Esophagus muscularis mucosa (tissue), 4 donors: ENCODE measurements at regions of chr1 and their contacts with region 1.

Region 1: DNA sequence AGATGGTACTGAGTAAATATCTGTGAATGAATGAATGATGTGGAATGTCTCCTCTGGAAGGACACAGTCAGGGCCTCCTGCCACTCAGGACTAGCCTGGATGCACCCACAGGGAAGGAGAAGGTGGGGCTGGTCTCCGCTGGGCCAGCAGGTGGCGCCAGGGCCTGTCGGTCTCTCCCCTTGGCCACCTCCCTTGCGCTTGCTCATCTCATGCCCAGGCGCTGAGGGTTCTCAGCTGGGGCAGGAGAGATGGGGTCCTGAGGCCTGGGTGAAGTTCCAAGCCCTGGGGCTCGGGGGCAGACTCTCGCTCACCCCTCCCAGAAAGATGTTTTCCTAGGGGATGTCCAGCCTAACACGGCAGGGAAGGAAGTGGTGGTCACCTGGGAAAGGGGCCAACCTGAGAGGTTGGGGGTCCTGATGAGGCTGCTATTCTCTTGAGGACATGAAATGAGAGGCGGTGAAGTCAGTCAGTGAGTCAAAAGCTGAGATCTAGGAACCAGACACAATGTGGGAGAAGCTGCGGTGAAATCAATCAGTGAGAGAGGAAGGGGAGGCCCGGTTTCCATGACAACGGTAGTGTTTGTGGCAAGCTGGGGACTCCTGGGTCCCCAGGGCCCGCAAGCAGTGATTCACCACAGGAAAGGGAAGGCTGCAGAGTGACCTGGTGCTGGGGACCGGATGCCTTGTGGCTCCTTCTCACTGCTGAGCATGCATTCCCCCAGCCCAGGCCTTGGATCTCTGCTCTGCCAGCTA is 14.6 kb upstream of the MEX3A start:
- DNase-seq: peak; percentile 97
- H3K4me3 ChIP-seq: peak overlapping the region in 2 of 4 donors; percentile 3 to 32
- H3K27ac ChIP-seq: peak overlapping the region; percentile 78 to 86 (median 84)
- H3K4me1 ChIP-seq: peaks cover 35 to 44% (median 42%) of the 10 kb centered on the region in 4 donors
- H3K27me3 ChIP-seq: no peaks in the 10 kb centered on the region
- CTCF ChIP-seq: peak in 2 of 3 experiments; percentile 97 to 99
- EP300 ChIP-seq: no peak
- POLR2A ChIP-seq: no peak

Region 2: GRCh38 chr1:156025877-156026276 is 70.9 kb before region 1 on chr1:
- intact Hi-C with region 1: no loop called
- DNase-seq: no peak
- H3K4me3 ChIP-seq: no peak overlapping the region
- H3K27ac ChIP-seq: no peak overlapping the region
- H3K4me1 ChIP-seq: peaks cover 0 to 5% (median 4%) of the 10 kb centered on the region in 4 donors
- H3K27me3 ChIP-seq: no peaks in the 10 kb centered on the region
- CTCF ChIP-seq: peak in 1 of 3 experiments; percentile 23
- EP300 ChIP-seq: no peak
- POLR2A ChIP-seq: no peak

Region 3: DNA sequence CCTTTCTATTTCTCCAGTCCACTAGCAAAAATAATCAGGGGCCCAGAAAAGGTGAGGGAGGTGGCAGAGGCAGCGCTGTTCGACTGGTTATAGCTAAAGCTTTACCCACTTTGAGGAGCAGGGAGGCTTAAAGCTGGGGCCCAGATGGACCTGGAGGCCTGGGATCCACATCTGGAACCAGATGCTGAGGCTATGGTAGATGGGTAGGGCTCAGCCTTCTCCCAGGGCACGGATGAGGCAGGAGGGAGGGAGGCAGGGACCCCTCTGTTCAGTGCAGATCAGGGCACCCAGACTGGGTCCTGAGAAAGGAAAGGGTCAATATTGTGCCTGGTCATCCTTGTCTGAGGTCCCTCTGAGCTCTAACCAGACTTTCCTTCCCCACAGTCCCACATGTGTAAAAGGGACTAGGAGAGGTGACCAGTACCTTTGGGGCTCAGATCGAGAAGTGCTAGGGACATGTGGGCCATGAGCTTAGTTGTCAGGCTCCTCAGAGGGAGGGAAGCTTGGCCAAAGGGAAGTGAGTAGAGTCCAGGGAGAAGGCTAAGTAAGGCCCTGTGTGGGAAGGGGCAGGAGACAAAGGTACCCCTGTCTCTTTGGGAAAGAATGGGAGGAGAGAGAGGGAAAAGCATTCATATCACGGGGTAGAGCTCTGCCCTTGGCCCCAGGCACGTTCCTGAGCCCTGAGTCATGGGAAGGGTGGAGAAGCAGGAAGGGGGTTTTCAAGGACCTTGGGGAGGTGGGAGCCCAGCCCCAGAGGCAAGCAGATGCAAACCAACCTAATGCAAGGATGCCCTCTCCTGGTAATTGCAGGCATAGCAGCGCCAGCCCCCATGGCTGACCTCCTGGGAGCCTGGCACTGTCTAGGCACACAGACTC is 33.1 kb after region 1 on chr1:
- intact Hi-C with region 1: loop called (anchors 1 kb)
- DNase-seq: no peak
- H3K4me3 ChIP-seq: peak overlapping the region; percentile 23 to 69 (median 32)
- H3K27ac ChIP-seq: peak overlapping the region; percentile 92 to 100 (median 96)
- H3K4me1 ChIP-seq: peaks cover 65 to 100% (median 70%) of the 10 kb centered on the region in 4 donors
- H3K27me3 ChIP-seq: no peaks in the 10 kb centered on the region
- CTCF ChIP-seq: peak; percentile 99
- EP300 ChIP-seq: no peak
- POLR2A ChIP-seq: no peak

Region 4: DNA sequence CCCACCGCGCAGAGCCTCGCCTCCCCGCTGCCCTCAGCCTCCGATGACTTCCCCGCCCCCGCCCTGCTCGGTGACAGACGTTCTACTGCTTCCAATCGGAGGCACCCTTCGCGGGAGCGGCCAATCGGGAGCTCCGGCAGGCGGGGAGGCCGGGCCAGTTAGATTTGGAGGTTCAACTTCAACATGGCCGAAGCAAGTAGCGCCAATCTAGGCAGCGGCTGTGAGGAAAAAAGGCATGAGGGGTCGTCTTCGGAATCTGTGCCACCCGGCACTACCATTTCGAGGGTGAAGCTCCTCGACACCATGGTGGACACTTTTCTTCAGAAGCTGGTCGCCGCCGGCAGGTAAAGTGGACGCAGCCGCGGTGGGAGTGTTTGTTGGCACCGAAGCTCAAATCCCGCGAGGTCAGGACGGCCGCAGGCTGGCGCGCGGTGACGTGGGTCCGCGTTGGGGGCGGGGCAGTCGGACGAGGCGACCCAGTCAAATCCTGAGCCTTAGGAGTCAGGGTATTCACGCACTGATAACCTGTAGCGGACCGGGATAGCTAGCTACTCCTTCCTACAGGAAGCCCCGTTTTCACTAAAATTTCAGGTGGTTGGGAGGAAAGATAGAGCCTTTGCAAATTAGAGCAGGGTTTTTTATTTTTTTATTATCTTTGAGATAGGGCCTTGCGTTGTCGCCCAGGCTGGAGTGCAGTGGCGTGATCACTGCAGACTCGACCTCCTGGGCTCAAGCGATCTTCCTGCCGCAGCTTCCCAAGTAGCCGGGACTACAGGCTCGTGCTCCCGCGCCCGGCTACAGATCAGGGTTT is 116.2 kb after region 1 on chr1 and contains the start of gene PMF1:
- intact Hi-C with region 1: loop called (anchors 5 kb)
- DNase-seq: peak; percentile 99
- H3K4me3 ChIP-seq: peak within 1 kb of the TSS; percentile 63 to 79 (median 64)
- H3K27ac ChIP-seq: peak within 1 kb of the TSS; percentile 88 to 92 (median 90)
- H3K4me1 ChIP-seq: peaks cover 22 to 45% (median 40%) of the 10 kb centered on the region in 4 donors
- H3K27me3 ChIP-seq: no peaks in the 10 kb centered on the region
- CTCF ChIP-seq: no peak
- EP300 ChIP-seq: no peak
- POLR2A ChIP-seq: no peak
- total RNA-seq, gene PMF1: 45.0 to 60.4 (median 50.2) TPM